Activated CD8-positive, alpha-beta T cell treated with anti-CD3 and anti-CD28 coated beads, Interleukin-2, amount 10 ng/mL, durations not matched to agents 7 days and 5 days (primary cell): ENCODE measurements at regions of chr6 and their contacts with region 1.

Region 1: GRCh38 chr6:133916650-133917151 is 27.8 kb downstream of the TCF21 start:
- DNase-seq: peak; percentile 86
- ATAC-seq: peak; percentile 75
- H3K4me3 Mint-ChIP-seq: no peak overlapping the region
- H3K27ac Mint-ChIP-seq: no peak overlapping the region
- H3K4me1 Mint-ChIP-seq: peaks cover 9% of the 10 kb centered on the region
- H3K27me3 Mint-ChIP-seq: peaks cover 24% of the 10 kb centered on the region

Region 2: GRCh38 chr6:133568970-133569889 is 347.5 kb before region 1 on chr6:
- CTCF ChIA-PET with region 1: interaction called, 10 read pairs
- POLR2A ChIA-PET with region 1: no interaction called
- DNase-seq: peak; percentile 26
- ATAC-seq: peak; percentile 65
- H3K4me3 Mint-ChIP-seq: no peak overlapping the region
- H3K27ac Mint-ChIP-seq: no peak overlapping the region
- H3K4me1 Mint-ChIP-seq: peaks cover 4% of the 10 kb centered on the region
- H3K27me3 Mint-ChIP-seq: peaks cover 17% of the 10 kb centered on the region

Region 3: GRCh38 chr6:133837801-133838349 is 78.8 kb before region 1 on chr6:
- CTCF ChIA-PET with region 1: interaction called, 38 read pairs
- POLR2A ChIA-PET with region 1: no interaction called
- DNase-seq: peak; percentile 71
- ATAC-seq: peak; percentile 92
- H3K4me3 Mint-ChIP-seq: peak overlapping the region; percentile 72
- H3K27ac Mint-ChIP-seq: no peak overlapping the region
- H3K4me1 Mint-ChIP-seq: peaks cover 3% of the 10 kb centered on the region
- H3K27me3 Mint-ChIP-seq: peaks cover 14% of the 10 kb centered on the region

Region 4: DNA sequence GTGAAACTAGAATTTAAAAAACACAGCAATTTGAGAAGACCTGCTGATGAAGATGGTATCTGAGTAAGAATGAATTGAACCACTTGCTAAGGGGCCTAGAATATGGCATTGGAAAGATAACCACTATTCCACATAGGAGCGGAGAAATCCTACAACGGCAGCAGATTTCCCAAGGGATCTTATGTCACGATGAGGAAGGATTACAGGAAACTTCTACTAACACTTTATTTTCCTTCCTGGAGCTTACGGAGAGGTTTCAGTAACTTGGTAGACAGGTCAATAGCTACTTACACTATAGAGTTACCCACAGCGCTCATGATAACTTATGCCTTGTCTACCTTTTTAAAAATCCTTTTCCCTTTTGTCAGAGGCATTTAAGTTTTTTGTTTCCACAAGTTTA is 39.6 kb before region 1 on chr6:
- CTCF ChIA-PET with region 1: no interaction called
- POLR2A ChIA-PET with region 1: no interaction called
- DNase-seq: no peak
- ATAC-seq: no peak
- H3K4me3 Mint-ChIP-seq: no peak overlapping the region
- H3K27ac Mint-ChIP-seq: no peak overlapping the region
- H3K4me1 Mint-ChIP-seq: no peaks in the 10 kb centered on the region
- H3K27me3 Mint-ChIP-seq: peaks cover 24% of the 10 kb centered on the region

Region 5: GRCh38 chr6:133895573-133896343 is 20.9 kb before region 1 on chr6:
- CTCF ChIA-PET with region 1: interaction called, 18 read pairs
- POLR2A ChIA-PET with region 1: no interaction called
- DNase-seq: no peak
- ATAC-seq: no peak
- H3K4me3 Mint-ChIP-seq: no peak overlapping the region
- H3K27ac Mint-ChIP-seq: no peak overlapping the region
- H3K4me1 Mint-ChIP-seq: peaks cover 17% of the 10 kb centered on the region
- H3K27me3 Mint-ChIP-seq: peaks cover 79% of the 10 kb centered on the region

Region 6: GRCh38 chr6:133906050-133906449 is 10.7 kb before region 1 on chr6:
- CTCF ChIA-PET with region 1: interaction called, 17 read pairs
- POLR2A ChIA-PET with region 1: no interaction called
- DNase-seq: no peak
- ATAC-seq: no peak
- H3K4me3 Mint-ChIP-seq: no peak overlapping the region
- H3K27ac Mint-ChIP-seq: no peak overlapping the region
- H3K4me1 Mint-ChIP-seq: no peaks in the 10 kb centered on the region
- H3K27me3 Mint-ChIP-seq: peaks cover 42% of the 10 kb centered on the region